Activated CD4-positive, alpha-beta T cell treated with anti-CD3 and anti-CD28 coated beads for 36 hours (primary cell): ENCODE measurements at regions of chr1 and their contacts with region 1.

Region 1: DNA sequence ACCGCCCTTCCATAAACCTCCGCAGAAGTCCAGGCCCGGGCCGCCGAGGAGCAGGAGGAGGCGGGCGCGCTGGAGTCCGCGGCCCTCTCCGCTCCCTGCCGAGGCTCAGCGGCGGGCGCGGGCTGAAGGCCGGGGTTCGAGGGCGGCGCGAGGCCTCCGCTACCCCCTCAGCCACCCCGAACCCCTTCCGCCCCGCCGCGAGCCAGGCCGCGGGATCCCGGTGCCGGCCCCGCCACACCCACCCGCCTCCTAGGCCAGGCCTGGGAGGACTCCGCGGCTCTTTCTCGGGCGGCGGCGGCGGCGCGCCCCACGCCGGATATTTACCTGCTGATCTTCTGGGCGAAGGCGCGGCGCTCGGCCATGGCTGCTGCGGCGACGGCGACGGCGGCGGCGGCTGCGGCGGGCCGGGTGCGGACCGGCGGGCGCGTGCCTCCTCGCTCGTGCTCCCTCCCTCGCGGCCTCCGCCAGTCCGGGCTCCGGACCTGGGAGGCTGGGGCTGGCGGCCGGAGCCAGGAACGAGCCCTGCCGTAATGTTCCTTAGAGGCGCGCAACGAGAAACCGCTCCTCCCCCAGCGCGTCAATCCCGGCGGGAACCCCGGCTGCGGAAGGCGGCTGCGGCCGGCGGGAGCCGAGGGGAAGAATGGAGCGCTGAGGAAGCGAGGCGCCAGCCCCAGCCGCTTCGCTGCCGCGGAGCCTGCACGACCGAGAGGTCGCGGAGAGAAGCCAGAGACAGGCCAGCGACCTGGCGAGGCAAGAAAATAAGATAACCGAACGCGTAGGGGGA is at the start of gene DOCK7:
- DNase-seq: peak; percentile 69
- ATAC-seq: peak; percentile 64
- H3K4me3 Mint-ChIP-seq: peak within 1 kb of the TSS; percentile 88
- H3K27ac Mint-ChIP-seq: peak within 1 kb of the TSS; percentile 87
- H3K4me1 Mint-ChIP-seq: peaks cover 30% of the 10 kb centered on the region
- H3K27me3 Mint-ChIP-seq: no peaks in the 10 kb centered on the region
- total RNA-seq, gene DOCK7: 11.9 to 13.7 TPM

Region 2: DNA sequence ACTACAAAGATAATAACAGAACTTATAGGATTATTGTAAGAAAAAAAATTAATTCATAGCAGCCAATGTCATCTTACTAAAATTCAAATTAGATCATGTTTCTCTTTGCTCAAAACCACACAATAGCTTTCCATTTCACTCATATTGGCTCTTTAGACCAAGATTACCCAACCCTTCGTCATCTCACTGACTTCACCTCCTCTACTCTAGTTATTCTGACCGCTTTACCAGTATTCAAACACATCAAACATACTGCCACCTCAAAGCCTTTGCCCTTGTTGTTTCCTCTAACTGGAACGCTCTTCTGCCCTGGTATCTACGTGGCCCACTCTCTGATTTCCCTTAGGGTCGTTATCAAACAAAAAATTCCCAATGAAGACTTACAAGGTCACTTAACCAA is 89.1 kb before region 1 on chr1:
- CTCF ChIA-PET with region 1: no interaction called
- POLR2A ChIA-PET with region 1: no interaction called
- intact Hi-C with region 1: no loop called
- DNase-seq: no peak
- ATAC-seq: peak; percentile 60
- H3K4me3 Mint-ChIP-seq: no peak overlapping the region
- H3K27ac Mint-ChIP-seq: no peak overlapping the region
- H3K4me1 Mint-ChIP-seq: peaks cover 4% of the 10 kb centered on the region
- H3K27me3 Mint-ChIP-seq: no peaks in the 10 kb centered on the region

Region 3: GRCh38 chr1:62621907-62622306 is 66.2 kb before region 1 on chr1:
- CTCF ChIA-PET with region 1: no interaction called
- POLR2A ChIA-PET with region 1: no interaction called
- intact Hi-C with region 1: loop called in 1 of 2 experiments (anchors 5 kb)
- DNase-seq: no peak
- ATAC-seq: peak; percentile 95
- H3K4me3 Mint-ChIP-seq: no peak overlapping the region
- H3K27ac Mint-ChIP-seq: no peak overlapping the region
- H3K4me1 Mint-ChIP-seq: peaks cover 11% of the 10 kb centered on the region
- H3K27me3 Mint-ChIP-seq: no peaks in the 10 kb centered on the region

Region 4: GRCh38 chr1:62735491-62736171 is 47.5 kb after region 1 on chr1:
- CTCF ChIA-PET with region 1: no interaction called
- POLR2A ChIA-PET with region 1: no interaction called
- intact Hi-C with region 1: no loop called
- DNase-seq: no peak
- ATAC-seq: no peak
- H3K4me3 Mint-ChIP-seq: no peak overlapping the region
- H3K27ac Mint-ChIP-seq: no peak overlapping the region
- H3K4me1 Mint-ChIP-seq: no peaks in the 10 kb centered on the region
- H3K27me3 Mint-ChIP-seq: peaks cover 8% of the 10 kb centered on the region

Region 5: DNA sequence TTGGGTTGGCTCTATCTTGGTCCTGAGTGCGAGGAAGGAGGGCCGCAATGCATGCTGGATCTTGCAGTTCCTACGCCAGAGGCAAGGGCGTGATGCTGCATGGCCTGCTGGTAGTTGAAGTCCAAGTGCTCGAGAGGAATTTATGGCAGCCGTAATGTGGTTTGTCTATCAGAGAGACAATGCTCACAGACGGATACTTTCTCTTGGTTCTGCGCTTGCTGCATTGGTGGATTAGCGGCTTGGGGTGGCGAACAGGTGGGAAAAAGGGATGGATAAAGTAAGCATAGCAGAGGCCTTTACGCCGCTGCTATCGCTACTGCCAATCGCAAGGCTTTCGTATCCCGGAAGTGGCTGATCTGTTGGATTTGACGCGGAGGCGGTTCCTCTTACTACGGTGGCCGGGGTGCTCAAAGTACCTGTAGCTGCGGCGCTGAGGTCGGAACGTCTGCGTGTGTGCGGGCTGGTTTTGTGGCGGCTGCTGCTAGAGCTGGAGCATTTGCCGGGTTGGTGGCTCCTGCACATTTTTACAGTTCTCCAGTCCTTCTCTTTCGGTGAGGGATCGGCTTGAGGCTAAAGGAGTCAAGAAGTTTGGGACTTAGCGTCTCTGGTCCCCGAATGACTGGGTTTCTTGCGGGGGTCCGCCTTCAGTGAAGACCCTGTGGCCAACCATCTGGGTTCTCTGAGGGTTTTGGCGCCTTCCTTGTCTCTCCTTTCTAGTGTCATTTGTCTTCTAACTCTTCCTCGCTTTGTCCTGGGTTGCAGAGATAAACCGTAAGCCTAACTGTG is 95.8 kb after region 1 on chr1 and contains the start of gene ATG4C:
- CTCF ChIA-PET with region 1: no interaction called
- POLR2A ChIA-PET with region 1: no interaction called
- intact Hi-C with region 1: loop called in 1 of 2 experiments (anchors 1 kb)
- DNase-seq: peak; percentile 96
- ATAC-seq: peak; percentile 99
- H3K4me3 Mint-ChIP-seq: no peak within 1 kb of the TSS
- H3K27ac Mint-ChIP-seq: no peak within 1 kb of the TSS
- H3K4me1 Mint-ChIP-seq: peaks cover 17% of the 10 kb centered on the region
- H3K27me3 Mint-ChIP-seq: peaks cover 10% of the 10 kb centered on the region
- total RNA-seq, gene ATG4C: 16.2 to 17.7 TPM